Upper lobe of right lung (tissue), 1 donor: ENCODE measurements at regions of chr10 and their contacts with region 1.

Region 1: DNA sequence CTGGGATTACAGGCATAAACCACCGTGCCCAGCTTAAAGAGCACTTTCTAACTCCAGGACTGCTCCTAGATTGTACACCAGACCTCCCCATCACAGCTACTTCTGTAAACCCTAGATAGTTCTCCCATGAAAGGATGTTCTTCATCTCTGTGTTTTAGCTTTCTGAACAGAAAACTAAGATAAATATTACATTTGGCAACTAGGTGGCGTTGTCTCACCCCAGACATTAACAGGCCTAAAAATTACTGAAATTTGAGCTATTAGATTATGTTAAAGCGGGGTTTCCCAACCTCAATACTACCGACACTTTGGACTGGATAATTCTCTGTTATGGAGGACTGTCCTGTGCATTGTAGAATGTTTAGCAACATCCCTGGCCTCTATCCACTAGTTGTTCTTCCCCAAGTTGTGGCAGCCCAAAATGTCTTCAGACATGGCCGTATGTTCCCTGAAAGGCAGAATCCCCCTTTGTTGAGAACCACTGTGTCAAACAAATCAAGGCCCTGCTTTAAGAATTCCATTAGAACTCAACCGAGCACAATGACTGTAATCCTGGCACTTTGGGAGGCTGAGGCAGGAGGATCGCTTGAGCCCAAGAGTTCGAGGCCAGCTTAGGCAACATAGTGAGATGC is 19.1 kb downstream of the ATOH7 start:
- DNase-seq: no peak
- ATAC-seq: peak; percentile 56
- H3K4me3 ChIP-seq: no peak overlapping the region
- H3K27ac ChIP-seq: no peak overlapping the region
- H3K4me1 ChIP-seq: no peaks in the 10 kb centered on the region
- H3K27me3 ChIP-seq: no peaks in the 10 kb centered on the region
- CTCF ChIP-seq: peak; percentile 59

Region 2: GRCh38 chr10:67401711-67402110 is 811.1 kb before region 1 on chr10:
- intact Hi-C with region 1: no loop called
- DNase-seq: no peak
- ATAC-seq: no peak
- H3K4me3 ChIP-seq: no peak overlapping the region
- H3K27ac ChIP-seq: no peak overlapping the region
- H3K4me1 ChIP-seq: no peaks in the 10 kb centered on the region
- H3K27me3 ChIP-seq: no peaks in the 10 kb centered on the region
- CTCF ChIP-seq: no peak

Region 3: GRCh38 chr10:68301790-68302502 is 89.1 kb after region 1 on chr10:
- intact Hi-C with region 1: loop called (anchors 10 kb)
- DNase-seq: no peak
- ATAC-seq: peak; percentile 76
- H3K4me3 ChIP-seq: no peak overlapping the region
- H3K27ac ChIP-seq: no peak overlapping the region
- H3K4me1 ChIP-seq: no peaks in the 10 kb centered on the region
- H3K27me3 ChIP-seq: no peaks in the 10 kb centered on the region
- CTCF ChIP-seq: peak; percentile 63